ENCODE measurements at regions of chr9 and their contacts with region 1.

Region 1: GRCh38 chr9:84953797-84954705 is 284.5 kb downstream of the NTRK2 start:
- DNase-seq: peak; percentile 79 to 89
- H3K4me3 ChIP-seq: no peak overlapping the region
- H3K27ac ChIP-seq: no peak overlapping the region
- H3K4me1 ChIP-seq: peaks cover 0 to 5% of the 10 kb centered on the region in 2 donors
- H3K27me3 ChIP-seq: no peaks in the 10 kb centered on the region
- CTCF ChIP-seq: peak; percentile 88 to 96 (median 92)
- POLR2A ChIP-seq: no peak

Region 2: DNA sequence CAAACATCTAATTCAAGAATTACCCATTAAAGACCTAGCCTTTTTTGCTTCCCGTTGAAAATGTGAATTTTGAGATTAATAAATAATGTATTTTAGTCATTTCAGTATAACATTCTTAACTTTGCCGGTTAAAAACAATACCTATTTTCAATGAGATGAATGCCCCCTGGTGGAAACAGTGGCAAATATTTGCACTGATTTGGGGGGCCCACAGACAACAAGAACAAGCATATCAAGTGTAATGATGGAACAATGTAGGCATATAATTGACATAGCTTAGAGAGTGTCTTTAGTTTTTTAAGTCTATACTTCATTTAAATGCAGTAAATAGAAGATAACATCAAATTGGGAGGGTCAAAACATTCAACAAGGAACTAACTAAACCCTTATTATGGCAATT is 172.6 kb before region 1 on chr9:
- intact Hi-C with region 1: loop called (anchors 10 kb)
- DNase-seq: peak; percentile 24 to 29
- H3K4me3 ChIP-seq: no peak overlapping the region
- H3K27ac ChIP-seq: no peak overlapping the region
- H3K4me1 ChIP-seq: no peaks in the 10 kb centered on the region
- H3K27me3 ChIP-seq: no peaks in the 10 kb centered on the region
- CTCF ChIP-seq: peak in 4 of 6 experiments; percentile 31 to 66 (median 54)
- POLR2A ChIP-seq: no peak

Region 3: DNA sequence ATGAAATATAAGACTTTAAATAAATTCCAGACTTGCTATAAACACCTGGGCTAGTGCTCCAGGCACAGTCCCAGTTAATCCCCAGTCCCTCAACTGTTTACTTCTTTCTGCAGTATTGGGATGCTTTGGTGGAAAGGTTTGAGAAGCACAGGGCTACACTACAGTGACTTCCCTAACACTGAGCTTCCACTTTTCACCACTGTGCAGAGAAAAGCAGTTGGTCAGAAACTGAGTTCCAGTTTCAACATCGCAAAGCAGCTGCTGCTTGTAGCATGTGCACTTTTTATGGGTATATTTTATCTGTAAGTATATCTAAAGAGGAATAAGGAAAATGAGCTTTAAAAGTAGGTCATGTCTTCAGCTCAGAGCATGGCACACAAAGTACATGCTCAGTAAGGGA is 55.2 kb after region 1 on chr9:
- intact Hi-C with region 1: no loop called
- DNase-seq: no peak
- H3K4me3 ChIP-seq: no peak overlapping the region
- H3K27ac ChIP-seq: no peak overlapping the region
- H3K4me1 ChIP-seq: no peaks in the 10 kb centered on the region
- H3K27me3 ChIP-seq: no peaks in the 10 kb centered on the region
- CTCF ChIP-seq: no peak
- POLR2A ChIP-seq: no peak